ENCODE measurements at regions of chr9 and their contacts with region 1.

Region 1: GRCh38 chr9:38047301-38048251 is 21.5 kb downstream of the SHB start:
- DNase-seq: peak; percentile 78 to 95
- H3K4me3 ChIP-seq: peak overlapping the region; percentile 56
- H3K27ac ChIP-seq: peak overlapping the region; percentile 100
- H3K4me1 ChIP-seq: peaks cover 79% of the 10 kb centered on the region
- H3K27me3 ChIP-seq: no peaks in the 10 kb centered on the region
- CTCF ChIP-seq: no peak

Region 2: DNA sequence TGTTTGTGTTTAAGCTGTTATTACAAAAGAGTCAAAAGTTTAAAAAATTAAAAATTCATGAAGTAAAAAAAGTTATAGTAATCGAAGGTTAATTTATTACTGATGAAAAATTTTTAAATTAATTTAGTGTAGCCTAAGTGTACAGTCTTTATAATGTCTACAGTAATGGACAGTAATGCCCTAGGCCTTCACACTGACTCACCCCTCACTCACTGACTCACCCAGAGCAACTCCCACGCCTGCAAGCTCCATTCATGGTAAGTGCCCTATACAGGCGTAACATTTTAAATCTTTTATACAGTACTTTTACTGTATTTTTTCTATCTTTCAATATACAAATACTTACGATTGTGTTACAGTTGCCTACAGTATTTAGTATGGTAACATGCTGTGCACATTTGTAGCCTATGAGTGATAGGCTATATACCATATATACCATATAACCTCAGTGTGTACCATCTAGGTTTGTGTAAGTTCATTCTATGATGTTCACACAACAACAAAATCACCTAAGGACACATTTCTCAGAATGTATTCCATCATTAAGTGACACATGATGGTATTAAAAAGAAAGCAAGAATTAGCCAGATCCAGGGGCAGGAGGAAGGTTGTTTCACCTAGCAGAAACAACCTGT is 206.9 kb before region 1 on chr9:
- CTCF ChIA-PET with region 1: no interaction called
- POLR2A ChIA-PET with region 1: no interaction called
- intact Hi-C with region 1: no loop called
- DNase-seq: peak; percentile 14 to 36
- H3K4me3 ChIP-seq: no peak overlapping the region
- H3K27ac ChIP-seq: no peak overlapping the region
- H3K4me1 ChIP-seq: peaks cover 5% of the 10 kb centered on the region; the same call in 1 of the 2 replicates
- H3K27me3 ChIP-seq: no peaks in the 10 kb centered on the region
- CTCF ChIP-seq: no peak

Region 3: GRCh38 chr9:38008168-38009034 is 39.2 kb before region 1 on chr9:
- CTCF ChIA-PET with region 1: no interaction called
- POLR2A ChIA-PET with region 1: interaction called, 3 read pairs
- intact Hi-C with region 1: loop called (anchors 5 kb)
- DNase-seq: peak; percentile 74 to 96
- H3K4me3 ChIP-seq: no peak overlapping the region
- H3K27ac ChIP-seq: peak overlapping the region; percentile 69
- H3K4me1 ChIP-seq: peaks cover 45% of the 10 kb centered on the region
- H3K27me3 ChIP-seq: no peaks in the 10 kb centered on the region
- CTCF ChIP-seq: no peak

Region 4: DNA sequence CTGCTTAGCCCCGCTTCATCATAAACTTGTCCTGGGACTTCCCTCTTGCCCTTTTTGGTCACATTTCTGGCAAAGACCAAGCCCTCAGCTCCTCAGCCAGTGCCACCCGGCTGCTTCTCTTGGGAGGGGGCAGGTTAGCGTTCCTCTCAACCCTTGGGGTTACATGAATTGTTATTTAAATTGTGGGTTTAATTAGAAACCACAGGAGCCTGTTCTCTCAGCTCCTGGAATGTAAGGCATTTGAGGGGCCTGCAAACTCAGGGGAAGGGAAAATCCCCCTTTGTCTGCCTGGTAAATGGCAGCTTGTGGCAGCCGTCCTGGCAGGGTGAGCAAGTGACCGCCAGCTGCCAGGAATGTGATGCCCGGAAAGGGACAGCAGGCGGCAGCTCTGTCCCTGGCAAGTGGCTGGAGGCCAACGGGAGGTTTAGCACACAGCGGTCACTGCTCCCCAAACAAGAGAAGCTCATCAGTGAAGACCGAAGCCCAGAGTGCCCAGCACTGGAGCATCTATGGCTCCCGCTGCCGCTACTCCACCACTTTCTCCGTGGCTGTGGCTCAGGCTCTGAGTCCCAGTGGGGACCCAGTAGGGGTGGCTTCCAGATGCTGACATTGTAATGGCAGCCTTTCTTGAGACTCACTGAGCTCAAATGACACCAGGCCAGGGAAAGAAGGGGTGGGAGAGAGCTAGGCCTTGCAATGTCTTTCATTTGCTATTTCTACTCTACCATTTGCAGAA is 30.3 kb before region 1 on chr9:
- CTCF ChIA-PET with region 1: interaction called, 3 read pairs
- POLR2A ChIA-PET with region 1: interaction called, 6 read pairs
- intact Hi-C with region 1: loop called (anchors 2 kb)
- DNase-seq: peak; percentile 51 to 80
- H3K4me3 ChIP-seq: no peak overlapping the region
- H3K27ac ChIP-seq: peak overlapping the region; percentile 85
- H3K4me1 ChIP-seq: peaks cover 64% of the 10 kb centered on the region
- H3K27me3 ChIP-seq: no peaks in the 10 kb centered on the region
- CTCF ChIP-seq: peak; percentile 39

Region 5: DNA sequence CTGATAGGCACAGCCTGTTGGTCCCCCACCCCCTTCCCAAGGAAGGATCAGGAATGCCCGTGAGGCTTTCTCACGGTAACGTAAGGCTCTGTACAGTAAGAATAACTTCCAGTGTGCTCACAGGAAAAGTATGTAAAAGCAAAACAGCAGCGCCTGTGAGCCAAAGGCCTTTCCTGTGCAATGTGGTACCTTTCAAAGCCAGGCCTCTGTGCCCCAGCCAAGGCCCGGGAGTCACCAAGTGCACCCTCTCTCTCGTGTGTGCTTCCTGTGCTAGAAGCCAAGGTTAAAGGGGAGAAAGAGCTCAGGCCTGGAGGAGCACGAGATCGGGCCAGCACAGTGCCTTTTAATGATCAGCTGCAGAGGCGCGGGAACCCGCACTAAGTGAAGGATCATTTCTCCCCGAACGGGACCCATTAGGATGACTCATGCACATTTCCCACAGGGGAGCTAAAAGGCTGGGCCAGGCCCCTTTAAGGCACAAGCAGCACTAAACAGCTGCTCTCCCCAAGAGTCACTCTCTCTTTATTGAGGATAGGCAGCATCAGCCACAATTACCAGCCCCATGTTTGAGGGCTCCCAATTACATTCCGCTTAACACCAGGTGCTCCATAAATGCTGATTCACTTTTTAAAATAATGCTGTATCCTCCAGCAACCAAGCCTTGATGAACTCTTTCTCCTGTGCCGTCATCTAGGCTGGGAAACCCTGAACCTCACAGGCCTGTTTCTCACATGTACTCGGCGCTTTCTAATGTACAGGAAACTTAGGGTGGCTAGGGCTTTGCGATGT is 21.4 kb before region 1 on chr9:
- CTCF ChIA-PET with region 1: no interaction called
- POLR2A ChIA-PET with region 1: interaction called, 12 read pairs
- intact Hi-C with region 1: loop called (anchors 1 kb)
- DNase-seq: peak; percentile 61 to 93
- H3K4me3 ChIP-seq: peak overlapping the region; percentile 28; the same call in 1 of the 2 replicates
- H3K27ac ChIP-seq: peak overlapping the region; percentile 93
- H3K4me1 ChIP-seq: peaks cover 93% of the 10 kb centered on the region
- H3K27me3 ChIP-seq: no peaks in the 10 kb centered on the region
- CTCF ChIP-seq: no peak

Measured in PC-9 (cell line).